ENCODE measurements at regions of chr2 and their contacts with region 1.

Region 1: DNA sequence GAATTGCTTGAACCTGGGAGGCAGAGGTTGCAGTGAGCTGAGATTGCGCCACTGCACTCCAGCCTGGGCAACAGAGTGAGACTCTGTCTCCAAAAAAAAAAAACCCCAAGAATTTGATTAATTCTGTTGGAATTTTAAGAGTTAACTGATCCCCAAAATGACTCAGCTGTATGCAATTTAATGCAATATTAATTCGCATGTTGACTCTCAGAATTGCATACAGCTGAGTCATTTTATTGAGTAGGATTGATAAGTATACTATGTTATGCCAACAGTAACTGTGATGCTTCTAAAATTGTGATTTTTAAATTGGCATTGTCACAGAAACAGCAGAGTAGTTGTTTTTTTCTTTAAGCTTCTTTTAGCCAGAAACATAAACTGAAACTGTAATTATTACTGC is 19.6 kb downstream of the MSH2 start:
- DNase-seq: peak; percentile 96
- ATAC-seq: peak; percentile 65
- H3K4me3 ChIP-seq: peak overlapping the region; percentile 23; the same call in 1 of the 2 replicates
- H3K27ac ChIP-seq: peak overlapping the region; percentile 81
- H3K4me1 ChIP-seq: peaks cover 37% of the 10 kb centered on the region
- H3K27me3 ChIP-seq: no peaks in the 10 kb centered on the region
- CTCF ChIP-seq: no peak

Region 2: DNA sequence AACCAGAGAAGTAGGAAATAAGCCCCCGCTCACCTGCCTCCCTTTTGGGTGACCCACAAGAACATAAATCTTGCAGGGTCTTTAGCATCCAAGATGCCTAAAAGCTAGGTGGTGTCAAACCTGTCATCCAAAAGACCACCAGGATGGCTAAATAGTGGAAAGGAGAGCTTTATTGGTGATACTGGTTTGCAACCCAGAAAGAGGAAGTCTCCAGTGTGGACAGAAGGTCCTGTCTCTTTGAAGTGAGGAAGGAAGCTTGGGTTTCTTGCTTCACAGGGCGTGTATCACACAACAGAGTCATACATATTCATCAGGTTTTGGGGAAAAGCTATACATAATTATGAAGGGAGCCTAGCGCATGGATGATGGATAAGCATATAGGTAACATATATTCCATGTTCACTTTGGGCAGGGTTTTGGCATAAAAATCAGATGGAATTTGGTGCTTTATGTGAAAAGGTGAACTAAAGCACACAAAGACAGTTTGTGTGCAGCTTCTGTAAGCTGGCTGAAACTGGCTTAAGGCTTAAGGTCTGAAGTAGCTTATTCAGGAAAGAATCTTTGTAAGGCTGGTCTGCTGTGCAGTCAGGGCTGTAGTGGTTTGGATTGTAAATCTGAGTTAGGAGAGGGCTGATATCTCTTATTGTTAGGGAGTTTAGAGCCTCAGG is 121.8 kb before region 1 on chr2:
- CTCF ChIA-PET with region 1: no interaction called
- POLR2A ChIA-PET with region 1: no interaction called
- intact Hi-C with region 1: no loop called
- DNase-seq: no peak
- ATAC-seq: no peak
- H3K4me3 ChIP-seq: no peak overlapping the region
- H3K27ac ChIP-seq: no peak overlapping the region
- H3K4me1 ChIP-seq: no peaks in the 10 kb centered on the region
- H3K27me3 ChIP-seq: no peaks in the 10 kb centered on the region
- CTCF ChIP-seq: no peak

Region 3: DNA sequence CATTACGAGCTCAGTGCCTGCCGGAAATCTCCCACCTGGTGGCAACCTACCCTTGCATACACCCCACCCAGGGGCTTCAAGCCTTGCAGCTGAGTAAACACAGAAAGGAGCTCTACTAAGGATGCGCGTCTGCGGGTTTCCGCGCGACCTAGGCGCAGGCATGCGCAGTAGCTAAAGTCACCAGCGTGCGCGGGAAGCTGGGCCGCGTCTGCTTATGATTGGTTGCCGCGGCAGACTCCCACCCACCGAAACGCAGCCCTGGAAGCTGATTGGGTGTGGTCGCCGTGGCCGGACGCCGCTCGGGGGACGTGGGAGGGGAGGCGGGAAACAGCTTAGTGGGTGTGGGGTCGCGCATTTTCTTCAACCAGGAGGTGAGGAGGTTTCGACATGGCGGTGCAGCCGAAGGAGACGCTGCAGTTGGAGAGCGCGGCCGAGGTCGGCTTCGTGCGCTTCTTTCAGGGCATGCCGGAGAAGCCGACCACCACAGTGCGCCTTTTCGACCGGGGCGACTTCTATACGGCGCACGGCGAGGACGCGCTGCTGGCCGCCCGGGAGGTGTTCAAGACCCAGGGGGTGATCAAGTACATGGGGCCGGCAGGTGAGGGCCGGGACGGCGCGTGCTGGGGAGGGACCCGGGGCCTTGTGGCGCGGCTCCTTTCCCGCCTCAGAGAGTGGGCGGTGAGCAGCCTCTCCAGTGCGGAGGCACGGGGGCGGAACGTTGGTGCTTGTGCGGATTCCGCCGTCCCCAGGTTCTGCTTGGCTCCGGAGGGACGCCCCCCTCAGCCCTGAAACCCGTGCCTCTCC is 19.6 kb before region 1 on chr2 and contains the start of gene MSH2:
- CTCF ChIA-PET with region 1: no interaction called
- POLR2A ChIA-PET with region 1: no interaction called
- intact Hi-C with region 1: loop called (anchors 2 kb)
- DNase-seq: peak; percentile 92
- ATAC-seq: peak; percentile 93
- H3K4me3 ChIP-seq: peak within 1 kb of the TSS; percentile 81
- H3K27ac ChIP-seq: peak within 1 kb of the TSS; percentile 53
- H3K4me1 ChIP-seq: peaks cover 13% of the 10 kb centered on the region; the same call in 1 of the 2 replicates
- H3K27me3 ChIP-seq: no peaks in the 10 kb centered on the region
- CTCF ChIP-seq: no peak
- total RNA-seq, gene MSH2: 69.2 and 70.7 TPM in 2 replicates